SK-MEL-5 (cell line): ENCODE measurements at regions of chr15 and their contacts with region 1.

Region 1: GRCh38 chr15:69225355-69226025 is 65.1 kb downstream of the GLCE start:
- DNase-seq: peak; percentile 62

Region 2: DNA sequence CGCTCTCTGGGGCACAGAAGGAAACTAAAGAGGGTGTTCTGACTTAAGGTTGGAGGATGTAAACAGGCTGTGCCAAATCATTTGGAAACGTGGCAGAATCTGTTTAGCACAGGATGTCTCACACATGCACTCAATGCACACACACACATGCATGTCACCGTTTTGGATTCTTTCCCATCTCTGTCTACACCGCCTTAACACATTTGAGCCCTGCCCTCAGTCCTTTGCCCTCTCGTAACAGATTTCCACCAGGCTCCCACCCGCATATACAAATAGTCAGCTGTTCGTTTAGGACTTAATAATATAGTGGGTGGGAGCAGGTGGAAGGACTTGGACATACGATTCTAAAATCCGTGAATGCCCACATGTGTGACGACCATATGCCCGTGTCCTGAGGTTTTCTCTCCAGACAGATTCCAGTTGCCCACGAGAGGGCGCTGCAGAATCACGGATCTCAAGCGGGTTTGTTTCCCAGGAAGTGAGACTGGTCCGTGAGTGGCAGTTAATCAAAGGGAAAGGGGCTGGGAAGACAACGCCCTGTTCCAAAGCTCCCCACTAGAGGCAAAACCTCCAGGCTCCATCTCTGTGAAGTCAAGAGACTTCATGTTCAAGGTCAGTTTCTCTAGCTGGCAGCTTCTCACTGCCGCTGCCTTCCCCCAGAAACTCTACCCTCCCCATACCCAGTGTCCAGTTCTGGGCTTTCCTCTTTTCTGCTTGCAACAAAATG is 166.5 kb before region 1 on chr15:
- in situ Hi-C with region 1: loop called (anchors 25 kb)
- DNase-seq: peak; percentile 94

Region 3: DNA sequence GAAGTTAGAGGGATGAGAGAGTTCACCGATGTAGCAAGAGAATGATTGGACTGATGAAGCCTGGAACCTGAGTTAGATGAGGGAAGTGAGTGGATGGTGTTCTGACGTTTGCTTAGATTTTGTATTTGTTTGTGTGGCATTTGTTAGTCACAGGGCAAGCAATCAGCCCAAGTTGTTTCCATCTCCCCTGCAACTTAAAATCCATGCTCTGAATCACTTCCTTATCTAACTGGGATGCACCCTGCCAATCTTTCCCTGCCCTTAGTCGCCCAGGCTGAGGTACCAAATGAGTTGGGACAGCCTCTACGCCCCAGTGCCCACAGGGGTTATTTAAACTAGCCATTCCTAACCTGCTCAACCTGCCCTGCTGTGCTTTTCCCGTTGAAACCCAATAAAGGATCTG is 85.8 kb after region 1 on chr15:
- in situ Hi-C with region 1: no loop called
- DNase-seq: no peak

Region 4: DNA sequence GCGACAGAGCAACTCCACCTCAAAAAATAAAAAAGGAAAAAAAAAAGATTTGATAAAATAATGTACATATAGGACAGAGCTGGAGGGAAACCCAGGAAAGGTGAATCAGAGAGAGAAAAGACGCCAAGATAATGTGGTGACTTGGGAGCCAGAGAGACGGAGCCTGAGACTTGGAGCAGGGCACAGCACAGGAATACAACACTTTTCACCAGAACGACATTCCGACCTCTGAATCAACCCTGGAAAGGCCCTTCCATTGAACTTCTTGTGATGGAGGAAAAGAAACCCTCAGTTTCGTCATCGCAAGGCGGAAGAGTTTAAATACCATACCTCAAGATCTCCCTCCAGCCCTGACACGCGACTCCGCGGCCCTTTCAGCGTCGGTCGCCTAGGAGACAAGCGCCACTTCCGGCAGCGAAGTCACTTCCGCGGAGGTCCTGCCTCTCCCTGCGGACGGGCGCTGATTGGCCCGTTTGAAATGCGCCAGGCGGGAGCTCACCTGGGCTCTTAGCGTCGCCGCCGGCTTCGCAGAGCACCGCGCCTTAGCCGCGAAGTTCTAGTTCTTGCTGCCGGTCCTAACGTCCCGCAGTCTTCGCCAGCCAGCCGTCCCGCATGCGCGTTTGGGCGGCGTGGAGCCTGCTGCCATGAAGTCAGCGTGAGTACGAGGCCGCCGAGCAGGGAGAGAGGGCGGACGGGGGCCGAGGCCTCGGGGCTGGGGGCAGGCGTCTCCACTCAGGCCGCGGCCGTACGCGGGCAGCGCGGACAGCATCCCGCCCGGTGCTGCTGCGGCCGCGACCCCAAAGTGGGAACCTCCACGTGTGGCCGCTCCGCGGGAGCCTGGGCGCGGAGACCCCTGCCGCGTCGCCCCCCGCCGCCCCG is 188.6 kb after region 1 on chr15 and contains the start of gene KIF23:
- in situ Hi-C with region 1: no loop called
- DNase-seq: peak; percentile 93
- total RNA-seq, gene KIF23: 61.8 and 63.0 TPM in 2 replicates